Activated CD4-positive, alpha-beta T cell treated with anti-CD3 and anti-CD28 coated beads for 36 hours (primary cell): ENCODE measurements at regions of chr10 and their contacts with region 1.

Region 1: GRCh38 chr10:123154092-123154921 is at the start of gene BUB3:
- DNase-seq: peak; percentile 97
- ATAC-seq: peak; percentile 90
- H3K4me3 Mint-ChIP-seq: peak within 1 kb of the TSS; percentile 100
- H3K27ac Mint-ChIP-seq: peak within 1 kb of the TSS; percentile 100
- H3K4me1 Mint-ChIP-seq: peaks cover 73% of the 10 kb centered on the region
- H3K27me3 Mint-ChIP-seq: peaks cover 8% of the 10 kb centered on the region
- total RNA-seq, gene BUB3: 230 to 242 TPM

Region 2: DNA sequence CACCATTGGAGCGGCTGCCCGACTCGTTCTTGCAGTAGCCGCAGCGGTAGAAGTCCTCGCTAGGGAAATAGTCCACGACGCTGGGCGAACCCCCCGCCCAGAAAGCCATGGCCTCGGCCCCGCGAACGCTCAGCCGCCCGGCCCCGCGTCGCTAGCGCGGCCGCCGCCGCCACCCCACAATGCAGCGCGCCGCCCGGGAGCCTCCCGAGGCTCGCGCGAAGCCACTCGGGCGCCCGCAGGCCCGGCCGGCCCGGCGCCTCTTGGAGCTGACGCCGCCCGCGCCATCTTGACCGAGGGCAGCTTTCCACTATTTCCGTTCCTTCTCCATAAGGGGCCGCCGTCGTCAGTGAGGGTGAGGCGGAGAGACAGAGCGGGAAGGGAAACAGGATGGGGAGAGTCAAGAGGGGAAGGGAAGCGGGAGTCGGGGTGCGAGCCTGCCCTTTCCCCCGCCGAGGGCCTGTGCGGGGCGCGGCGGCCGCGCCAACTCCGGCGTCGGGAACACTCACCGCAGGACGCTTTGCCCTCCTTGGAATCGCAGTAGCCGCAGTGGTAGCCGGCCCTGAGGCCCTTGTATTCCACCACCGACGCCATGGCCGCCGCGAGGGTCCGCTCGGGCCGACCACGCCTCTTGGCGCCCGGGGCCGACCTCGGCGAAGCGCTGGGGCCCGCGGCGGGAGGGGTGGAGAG is 1226.3 kb before region 1 on chr10 and contains the start of gene ATE1:
- CTCF ChIA-PET with region 1: no interaction called
- POLR2A ChIA-PET with region 1: no interaction called
- intact Hi-C with region 1: loop called in 1 of 2 experiments (anchors 10 kb)
- DNase-seq: peak; percentile 89
- ATAC-seq: peak; percentile 94
- H3K4me3 Mint-ChIP-seq: peak within 1 kb of the TSS; percentile 88
- H3K27ac Mint-ChIP-seq: peak within 1 kb of the TSS; percentile 96
- H3K4me1 Mint-ChIP-seq: peaks cover 20% of the 10 kb centered on the region
- H3K27me3 Mint-ChIP-seq: no peaks in the 10 kb centered on the region
- total RNA-seq, gene ATE1: 23.2 to 23.9 TPM

Region 3: DNA sequence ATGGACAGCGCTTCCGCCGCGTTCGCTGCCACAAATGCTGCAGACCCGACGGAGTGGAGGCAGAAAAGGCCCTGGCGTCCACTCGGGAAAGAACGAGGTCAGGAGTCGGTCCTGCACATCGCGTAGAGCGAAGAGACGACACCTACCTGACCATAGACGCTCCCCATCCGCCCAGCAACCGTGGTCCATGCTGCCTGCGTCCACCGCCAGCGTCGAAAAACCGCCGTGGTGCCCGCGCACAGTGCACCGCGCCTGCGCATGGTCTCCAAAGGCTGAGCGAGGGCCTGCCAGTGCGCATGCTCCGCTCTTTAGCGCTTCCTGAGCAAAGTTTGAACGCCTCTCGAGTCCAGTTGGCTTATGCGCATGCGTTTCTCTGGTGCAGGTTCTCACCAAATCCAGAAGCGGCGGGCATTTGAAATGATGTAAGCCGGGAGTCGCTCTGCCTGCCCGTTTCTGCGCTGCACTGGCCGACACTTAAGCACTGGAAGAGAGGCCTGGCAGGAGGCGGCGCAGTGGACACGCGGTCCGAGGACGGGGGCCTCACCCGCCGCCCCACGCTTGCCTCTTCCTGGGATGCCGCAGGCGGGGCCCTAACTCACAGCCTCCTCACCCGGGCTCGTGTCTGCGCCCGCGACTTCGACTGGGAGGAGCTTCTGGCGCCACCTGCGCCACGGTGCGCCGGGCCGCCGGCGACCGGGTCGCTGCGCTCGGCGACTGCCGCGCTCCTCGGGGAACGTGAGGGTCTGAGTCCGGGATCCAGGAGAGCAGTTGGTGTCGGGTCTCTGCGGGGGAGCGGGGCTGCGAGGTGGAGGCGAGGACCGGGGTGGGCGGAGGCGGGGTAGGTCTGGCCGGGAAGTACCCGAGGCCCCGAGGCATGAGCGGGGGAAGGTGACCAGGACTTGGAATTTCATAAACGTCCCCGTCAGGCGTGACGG is 274.7 kb before region 1 on chr10 and contains the start of gene FAM24B:
- CTCF ChIA-PET with region 1: no interaction called
- POLR2A ChIA-PET with region 1: no interaction called
- intact Hi-C with region 1: loop called (anchors 1 to 2 kb)
- DNase-seq: peak; percentile 96
- ATAC-seq: peak; percentile 90
- H3K4me3 Mint-ChIP-seq: peak within 1 kb of the TSS; percentile 92
- H3K27ac Mint-ChIP-seq: peak within 1 kb of the TSS; percentile 93
- H3K4me1 Mint-ChIP-seq: peaks cover 53% of the 10 kb centered on the region
- H3K27me3 Mint-ChIP-seq: no peaks in the 10 kb centered on the region
- total RNA-seq, gene FAM24B: 7.0 to 9.5 TPM

Region 4: DNA sequence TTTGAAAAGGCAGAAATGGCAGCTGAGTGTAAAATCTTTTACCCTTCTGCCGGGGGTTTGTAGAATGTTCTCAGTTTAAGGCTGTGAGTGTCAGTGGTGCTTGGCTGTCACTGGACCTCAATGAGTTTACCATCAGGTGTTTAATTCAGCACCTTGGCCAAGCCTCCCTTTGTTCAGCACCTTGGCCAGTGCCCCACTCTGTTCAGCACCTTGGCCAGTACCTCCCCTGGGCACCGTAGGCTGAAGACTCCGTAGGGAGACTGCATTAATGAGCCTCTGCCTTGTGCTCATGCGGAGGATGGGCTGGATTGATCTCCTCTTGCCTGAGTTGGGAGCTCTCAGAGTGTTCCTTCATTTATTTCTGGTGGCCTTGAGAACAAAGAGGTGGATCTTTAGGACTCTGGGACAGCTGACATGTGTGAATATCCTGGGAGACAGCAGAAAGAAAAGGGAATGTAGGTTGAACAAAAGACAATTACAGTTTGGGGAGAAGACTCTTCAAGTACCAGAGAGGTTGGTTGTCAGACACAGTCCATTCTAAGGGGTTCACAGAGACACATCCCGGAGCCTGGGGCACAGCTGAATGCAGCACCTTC is 242.3 kb before region 1 on chr10:
- CTCF ChIA-PET with region 1: no interaction called
- POLR2A ChIA-PET with region 1: no interaction called
- intact Hi-C with region 1: no loop called
- DNase-seq: peak; percentile 75
- ATAC-seq: peak; percentile 65
- H3K4me3 Mint-ChIP-seq: no peak overlapping the region
- H3K27ac Mint-ChIP-seq: no peak overlapping the region
- H3K4me1 Mint-ChIP-seq: no peaks in the 10 kb centered on the region
- H3K27me3 Mint-ChIP-seq: peaks cover 9% of the 10 kb centered on the region

Region 5: DNA sequence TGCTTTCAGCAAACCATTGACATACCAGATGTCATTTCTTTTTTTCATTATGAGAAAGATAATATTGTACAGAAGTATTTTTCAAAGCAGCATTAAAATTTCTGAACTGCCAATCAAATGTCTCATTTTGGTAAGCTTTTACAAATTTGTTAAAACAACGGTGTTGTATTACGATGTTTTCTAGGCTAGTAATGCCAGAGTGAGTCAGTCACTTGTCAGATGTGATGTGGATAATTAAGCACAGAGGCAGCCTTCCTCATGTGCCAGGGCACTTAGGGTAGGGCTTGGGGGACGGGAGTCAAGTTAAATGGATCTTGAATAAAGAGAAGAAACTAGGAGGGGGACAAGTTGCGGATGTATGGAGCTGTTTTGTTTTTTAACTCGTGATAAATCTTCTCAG is 164.0 kb before region 1 on chr10:
- CTCF ChIA-PET with region 1: no interaction called
- POLR2A ChIA-PET with region 1: no interaction called
- intact Hi-C with region 1: no loop called
- DNase-seq: no peak
- ATAC-seq: no peak
- H3K4me3 Mint-ChIP-seq: no peak overlapping the region
- H3K27ac Mint-ChIP-seq: peak overlapping the region; percentile 75
- H3K4me1 Mint-ChIP-seq: peaks cover 2% of the 10 kb centered on the region
- H3K27me3 Mint-ChIP-seq: no peaks in the 10 kb centered on the region

Region 6: DNA sequence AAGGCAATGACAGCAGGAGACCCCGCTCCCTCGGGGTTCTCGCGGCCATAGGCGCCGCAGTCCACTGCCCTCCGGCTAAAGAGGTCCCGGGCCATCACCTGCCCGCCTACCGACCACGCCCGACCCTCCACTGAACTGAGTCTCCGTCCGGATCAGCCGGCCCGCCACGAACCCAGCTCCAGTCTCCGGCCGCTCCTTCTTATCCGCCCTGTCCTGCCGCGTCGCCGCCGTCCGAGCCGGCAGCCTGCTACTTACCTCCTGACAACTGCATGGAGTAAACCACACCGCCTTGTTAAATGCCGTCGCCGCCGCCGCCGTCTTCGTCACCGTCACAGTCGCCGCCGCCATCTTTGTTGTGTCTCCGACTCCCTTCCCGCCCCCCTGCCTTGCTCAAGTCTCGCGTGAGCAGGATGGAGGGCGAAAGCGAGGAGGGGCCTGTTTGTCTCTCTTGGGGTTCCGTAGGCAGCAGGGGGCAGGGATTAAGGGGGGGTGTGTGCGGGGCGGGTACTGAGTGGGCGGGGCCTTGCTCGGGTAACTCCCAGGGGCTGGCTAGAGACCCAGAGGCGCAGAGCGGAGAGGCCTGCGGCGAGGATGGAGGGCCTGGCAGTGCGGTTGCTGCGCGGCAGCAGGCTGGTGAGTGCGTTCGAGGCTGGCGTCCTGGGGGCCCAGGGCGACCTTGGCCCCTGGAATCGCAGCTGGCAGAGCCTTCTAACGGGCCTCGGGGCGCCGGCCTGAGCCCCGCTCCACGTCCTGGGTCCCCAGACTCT is 145.7 kb before region 1 on chr10 and contains the starts of genes ACADSB and IKZF5:
- CTCF ChIA-PET with region 1: interaction called, 4 read pairs
- POLR2A ChIA-PET with region 1: no interaction called
- intact Hi-C with region 1: loop called (anchors 1 kb)
- DNase-seq: peak; percentile 98
- ATAC-seq: peak; percentile 87
- H3K4me3 Mint-ChIP-seq: peak within 1 kb of the TSS; percentile 95
- H3K27ac Mint-ChIP-seq: peak within 1 kb of the TSS; percentile 99
- H3K4me1 Mint-ChIP-seq: peaks cover 42% of the 10 kb centered on the region
- H3K27me3 Mint-ChIP-seq: no peaks in the 10 kb centered on the region
- total RNA-seq, gene ACADSB: 24.0 to 25.5 TPM
- total RNA-seq, gene IKZF5: 9.4 to 14.1 TPM

Region 7: GRCh38 chr10:124231168-124232155 is 1077.2 kb after region 1 on chr10:
- CTCF ChIA-PET with region 1: no interaction called
- POLR2A ChIA-PET with region 1: no interaction called
- intact Hi-C with region 1: loop called in 1 of 2 experiments (anchors 5 kb)
- DNase-seq: peak; percentile 85
- ATAC-seq: peak; percentile 65
- H3K4me3 Mint-ChIP-seq: peak overlapping the region; percentile 31
- H3K27ac Mint-ChIP-seq: no peak overlapping the region
- H3K4me1 Mint-ChIP-seq: no peaks in the 10 kb centered on the region
- H3K27me3 Mint-ChIP-seq: no peaks in the 10 kb centered on the region

Region 8: GRCh38 chr10:124719213-124719851 is 1565.0 kb after region 1 on chr10:
- CTCF ChIA-PET with region 1: no interaction called
- POLR2A ChIA-PET with region 1: no interaction called
- intact Hi-C with region 1: loop called in 1 of 2 experiments (anchors 10 kb)
- DNase-seq: peak; percentile 83
- ATAC-seq: peak; percentile 44
- H3K4me3 Mint-ChIP-seq: peak overlapping the region; percentile 68
- H3K27ac Mint-ChIP-seq: peak overlapping the region; percentile 95
- H3K4me1 Mint-ChIP-seq: peaks cover 95% of the 10 kb centered on the region
- H3K27me3 Mint-ChIP-seq: no peaks in the 10 kb centered on the region